ENCODE measurements at regions of chr17 and their contacts with region 1.

Region 1: DNA sequence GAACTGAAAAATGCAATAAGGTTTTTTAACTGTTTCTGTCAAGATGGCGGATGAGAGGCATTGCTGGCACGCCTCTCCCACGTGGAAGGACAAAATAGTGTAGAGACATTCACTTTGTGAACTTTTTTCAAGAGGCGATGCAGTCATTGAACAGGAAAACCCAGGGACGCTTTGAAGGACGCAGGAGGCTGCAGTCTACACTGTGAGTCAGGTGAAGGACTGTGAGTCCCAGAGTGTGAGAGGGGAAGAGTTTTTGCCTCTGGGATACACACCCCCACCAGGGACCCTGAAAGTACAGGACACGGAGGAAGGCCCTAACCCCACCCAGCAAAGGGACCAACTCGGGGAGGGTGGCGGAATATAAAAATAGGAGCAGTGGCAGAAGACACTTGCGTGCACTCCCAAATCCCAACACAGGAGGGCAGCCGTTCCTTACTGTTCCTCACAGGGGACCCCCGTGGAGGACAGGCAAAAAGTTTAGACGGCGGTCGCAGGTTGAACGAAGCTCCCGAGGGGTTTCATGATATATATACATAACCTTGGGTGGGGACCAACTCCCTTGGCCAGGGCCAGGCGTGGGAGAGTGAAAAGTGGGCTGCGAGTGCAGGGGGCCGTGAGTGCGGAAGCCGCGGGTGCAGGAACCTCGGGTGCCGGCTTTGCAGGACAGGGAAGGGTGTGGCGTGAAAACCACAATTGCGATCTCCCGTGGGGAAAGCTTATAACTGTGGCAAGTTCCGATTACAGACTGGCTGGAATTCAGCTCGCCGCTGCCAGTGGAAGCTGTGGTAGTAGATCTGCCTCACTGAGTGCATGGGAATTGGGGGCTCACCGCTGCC is 82.0 kb upstream of the ALOX12 start:
- DNase-seq: peak; percentile 88
- H3K4me3 ChIP-seq: peak overlapping the region in 7 of 8 donors; percentile 10 to 61 (median 30)
- H3K27ac ChIP-seq: peak overlapping the region; percentile 21 to 71 (median 50)
- H3K4me1 ChIP-seq: peaks cover 4 to 42% (median 20%) of the 10 kb centered on the region in 6 donors
- H3K27me3 ChIP-seq: peaks cover 0 to 11% (median 0%) of the 10 kb centered on the region in 7 donors
- CTCF ChIP-seq: peak; percentile 71 to 94 (median 88)
- POLR2A ChIP-seq: no peak

Region 2: GRCh38 chr17:7004398-7005253 is 90.8 kb after region 1 on chr17:
- intact Hi-C with region 1: loop called (anchors 2 kb)
- DNase-seq: peak; percentile 80
- H3K4me3 ChIP-seq: no peak overlapping the region
- H3K27ac ChIP-seq: peak overlapping the region in 1 of 8 donors; percentile 28
- H3K4me1 ChIP-seq: peaks cover 1 to 46% (median 27%) of the 10 kb centered on the region in 6 donors
- H3K27me3 ChIP-seq: no peaks in the 10 kb centered on the region
- CTCF ChIP-seq: peak; percentile 50 to 82 (median 75)
- POLR2A ChIP-seq: no peak

Region 3: DNA sequence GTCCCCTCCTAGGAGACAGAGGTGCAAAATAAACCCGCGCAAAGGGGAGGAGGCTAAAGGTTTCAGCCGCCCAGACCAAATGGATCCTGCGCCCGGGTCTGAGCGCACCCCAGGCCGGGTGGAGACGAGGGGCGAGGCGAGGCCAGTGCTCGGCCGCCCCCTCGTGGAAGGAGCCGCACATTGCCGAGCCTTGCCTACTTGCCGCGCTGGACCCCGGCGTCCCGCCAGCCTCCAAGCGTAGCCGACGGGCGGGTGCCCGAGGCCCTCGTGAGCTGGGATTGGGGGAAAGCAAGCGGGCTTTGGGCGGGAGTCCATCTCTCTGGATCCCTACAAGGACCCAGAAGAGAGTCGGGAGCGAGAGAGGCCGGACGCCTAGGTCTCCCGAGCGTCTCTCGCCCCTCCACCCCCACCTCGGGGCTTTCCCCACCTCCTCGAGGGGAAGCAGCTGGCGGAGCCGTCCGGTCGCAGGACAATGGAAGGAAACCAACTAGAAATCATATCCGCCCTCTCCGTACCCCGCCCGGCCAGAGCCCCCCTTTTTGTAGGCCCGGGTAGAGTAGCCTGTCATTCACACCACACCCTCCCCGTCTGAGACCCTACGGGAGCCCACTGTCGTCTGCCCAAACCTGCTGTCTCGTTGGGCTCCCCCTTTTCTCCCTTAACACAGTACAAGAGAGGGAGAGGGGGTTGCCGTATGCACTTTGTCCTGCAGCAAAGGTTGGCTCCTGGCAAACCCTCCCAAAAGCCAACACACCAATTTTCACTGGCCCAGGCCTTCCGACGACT is 108.4 kb after region 1 on chr17:
- intact Hi-C with region 1: loop called (anchors 5 kb)
- DNase-seq: peak; percentile 97
- H3K4me3 ChIP-seq: peak overlapping the region; percentile 16 to 69 (median 36)
- H3K27ac ChIP-seq: peak overlapping the region; percentile 65 to 100 (median 93)
- H3K4me1 ChIP-seq: peaks cover 32 to 98% (median 61%) of the 10 kb centered on the region in 6 donors
- H3K27me3 ChIP-seq: peaks cover 0 to 15% (median 0%) of the 10 kb centered on the region in 7 donors
- CTCF ChIP-seq: peak; percentile 89 to 99 (median 97)
- POLR2A ChIP-seq: peak in 1 of 3 donors; percentile 14

Region 4: GRCh38 chr17:7136266-7136877 is 222.5 kb after region 1 on chr17:
- intact Hi-C with region 1: loop called (anchors 5 kb)
- DNase-seq: peak; percentile 93
- H3K4me3 ChIP-seq: peak overlapping the region in 1 of 8 donors; percentile 1
- H3K27ac ChIP-seq: peak overlapping the region in 2 of 8 donors; percentile 18 to 39
- H3K4me1 ChIP-seq: peaks cover 15 to 50% (median 34%) of the 10 kb centered on the region in 6 donors
- H3K27me3 ChIP-seq: peaks cover 0 to 46% (median 8%) of the 10 kb centered on the region in 7 donors
- CTCF ChIP-seq: peak; percentile 69 to 93 (median 89)
- POLR2A ChIP-seq: no peak

Measured in spleen (tissue), 13 donors.